ENCODE measurements at regions of chr2 and their contacts with region 1.

Region 1: DNA sequence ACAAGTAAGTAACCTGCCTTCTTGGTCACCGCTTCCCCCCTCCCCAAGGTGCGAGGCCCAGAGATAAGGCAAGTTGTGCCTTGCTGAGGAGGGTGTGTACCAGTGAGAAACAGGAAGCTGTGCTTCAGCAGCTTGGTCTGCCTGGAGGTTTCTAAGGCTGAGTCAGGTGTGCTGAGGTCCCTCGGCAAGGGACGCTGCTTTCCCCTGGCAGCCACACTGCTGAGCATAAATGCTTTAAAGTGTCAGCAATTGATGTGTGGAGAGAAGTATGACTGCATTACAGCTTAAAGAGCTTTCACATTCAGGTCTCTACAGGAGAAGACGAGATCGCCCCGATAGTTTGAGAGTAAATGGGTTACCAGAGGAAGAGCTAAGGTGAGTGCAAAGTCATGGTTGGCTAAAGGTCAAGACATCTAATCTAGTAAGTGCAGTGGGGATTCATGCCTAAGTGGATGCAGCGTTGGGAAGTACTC is 86.9 kb downstream of the LIMS1 start:
- DNase-seq: peak; percentile 74
- H3K4me3 Mint-ChIP-seq: peak overlapping the region; percentile 90
- H3K27ac Mint-ChIP-seq: peak overlapping the region; percentile 97
- H3K4me1 Mint-ChIP-seq: peaks cover 74% of the 10 kb centered on the region
- H3K27me3 Mint-ChIP-seq: no peaks in the 10 kb centered on the region

Region 2: DNA sequence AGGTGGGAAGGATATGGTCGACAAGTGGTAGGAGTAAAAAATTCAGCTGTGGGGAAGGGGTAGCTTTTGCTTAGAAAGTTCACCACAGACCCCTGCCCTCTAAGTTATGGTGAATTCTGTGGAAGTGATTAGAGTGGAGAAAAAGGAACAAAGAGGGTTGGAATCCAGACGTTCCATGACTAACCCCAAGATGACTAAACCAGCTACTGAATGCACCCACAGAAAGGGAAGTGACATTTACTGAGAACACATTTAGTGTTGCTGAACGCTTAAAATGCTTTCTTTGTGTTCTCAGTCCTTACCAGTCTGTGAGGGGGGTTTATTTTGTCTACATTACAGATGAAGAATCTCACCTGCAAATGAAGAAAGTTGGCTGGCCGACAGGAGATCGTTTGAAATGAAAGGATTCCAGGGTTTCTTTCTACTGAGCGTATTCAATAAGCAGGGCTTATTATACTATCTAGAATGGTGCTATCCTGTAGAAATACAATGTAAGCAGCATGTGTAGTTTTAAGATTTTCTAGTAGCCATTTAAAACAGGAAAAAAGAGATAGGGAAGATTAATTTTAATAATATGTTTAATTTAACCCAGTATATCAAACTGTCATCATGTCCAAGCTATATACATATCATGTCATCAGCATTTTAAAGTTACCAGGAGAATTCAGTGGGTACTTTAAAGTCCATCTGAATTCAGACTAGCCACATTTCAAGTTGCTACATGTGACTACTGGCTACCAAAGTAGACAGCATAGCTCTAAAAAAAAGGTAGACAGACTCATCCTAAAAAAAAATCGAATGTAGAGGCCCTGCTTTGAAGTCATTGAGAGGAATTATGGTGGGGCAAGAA is 26.8 kb before region 1 on chr2:
- intact Hi-C with region 1: loop called (anchors 2 kb)
- DNase-seq: no peak
- H3K4me3 Mint-ChIP-seq: peak overlapping the region; percentile 75
- H3K27ac Mint-ChIP-seq: peak overlapping the region; percentile 91
- H3K4me1 Mint-ChIP-seq: peaks cover 58% of the 10 kb centered on the region
- H3K27me3 Mint-ChIP-seq: no peaks in the 10 kb centered on the region